IMR-90 (cell line): ENCODE measurements at regions of chr17 and their contacts with region 1.

Region 1: GRCh38 chr17:47776330-47777197 is 43.5 kb downstream of the TBX21 start:
- DNase-seq: peak; percentile 42
- ATAC-seq: peak; percentile 94
- H3K4me3 ChIP-seq: no peak overlapping the region
- H3K27ac ChIP-seq: no peak overlapping the region
- H3K4me1 ChIP-seq: no peaks in the 10 kb centered on the region
- H3K27me3 ChIP-seq: peaks cover 60% of the 10 kb centered on the region
- CTCF ChIP-seq: peak; percentile 66
- POLR2A ChIP-seq: no peak
- RAD21 ChIP-seq: peak; percentile 67

Region 2: GRCh38 chr17:47253541-47254402 is 522.8 kb before region 1 on chr17 and contains the start of gene ITGB3:
- CTCF ChIA-PET with region 1: no interaction called
- POLR2A ChIA-PET with region 1: no interaction called
- dilution Hi-C with region 1: no loop called
- in situ Hi-C with region 1: no loop called
- intact Hi-C with region 1: no loop called
- DNase-seq: peak; percentile 67
- ATAC-seq: peak; percentile 91
- H3K4me3 ChIP-seq: peak within 1 kb of the TSS; percentile 99
- H3K27ac ChIP-seq: peak within 1 kb of the TSS; percentile 89
- H3K4me1 ChIP-seq: peaks cover 15% of the 10 kb centered on the region
- H3K27me3 ChIP-seq: no peaks in the 10 kb centered on the region; the same call in 1 of the 2 replicates
- CTCF ChIP-seq: peak; percentile 46
- POLR2A ChIP-seq: peak; percentile 57; the same call in 1 of the 2 replicates
- RAD21 ChIP-seq: peak; percentile 36
- total RNA-seq, gene ITGB3: 14.4 and 17.6 TPM in 2 replicates

Region 3: DNA sequence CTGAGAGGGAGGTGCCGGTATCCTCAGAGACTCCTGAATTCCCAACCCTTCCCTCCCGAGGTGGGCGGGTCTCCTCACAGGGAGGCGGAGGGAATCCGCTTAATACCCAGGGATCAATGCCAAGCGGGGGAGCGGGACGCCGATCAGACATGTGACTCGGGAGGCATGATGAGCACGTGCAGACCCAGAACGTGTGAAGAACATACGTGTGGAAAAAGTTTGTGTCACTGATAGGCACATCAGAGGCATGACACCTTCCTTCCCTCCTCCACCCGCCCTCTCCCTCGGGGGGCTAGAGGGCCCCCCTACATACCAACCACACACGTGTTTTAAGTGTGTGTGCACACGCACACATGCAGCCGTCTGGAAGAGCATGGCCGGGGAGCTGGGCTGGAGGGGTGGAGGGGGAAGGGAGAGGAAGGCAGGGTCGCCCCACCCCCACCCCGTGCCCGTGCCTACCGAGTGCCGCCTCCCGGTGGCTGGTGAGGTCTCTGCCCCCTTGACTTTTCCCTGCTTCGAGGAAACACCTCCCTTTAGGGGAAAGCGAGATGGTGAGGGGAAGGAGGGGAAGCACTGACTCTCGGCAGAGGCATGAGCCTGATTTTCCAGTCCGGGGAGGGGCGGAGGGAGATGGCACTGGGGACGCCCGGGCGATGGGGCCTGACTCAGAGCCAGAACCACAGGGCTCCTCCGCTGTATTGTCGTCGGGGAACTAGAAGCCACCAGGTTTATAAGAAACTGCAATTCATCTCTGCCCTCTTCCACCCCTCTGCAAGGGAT is 55.6 kb before region 1 on chr17:
- CTCF ChIA-PET with region 1: no interaction called
- POLR2A ChIA-PET with region 1: no interaction called
- dilution Hi-C with region 1: no loop called
- in situ Hi-C with region 1: no loop called
- intact Hi-C with region 1: loop called (anchors 10 kb)
- DNase-seq: no peak
- ATAC-seq: peak; percentile 7; the same call in 1 of the 2 replicates
- H3K4me3 ChIP-seq: no peak overlapping the region
- H3K27ac ChIP-seq: no peak overlapping the region
- H3K4me1 ChIP-seq: peaks cover 27% of the 10 kb centered on the region
- H3K27me3 ChIP-seq: peaks cover 87% of the 10 kb centered on the region
- CTCF ChIP-seq: no peak
- POLR2A ChIP-seq: no peak
- RAD21 ChIP-seq: no peak

Region 4: DNA sequence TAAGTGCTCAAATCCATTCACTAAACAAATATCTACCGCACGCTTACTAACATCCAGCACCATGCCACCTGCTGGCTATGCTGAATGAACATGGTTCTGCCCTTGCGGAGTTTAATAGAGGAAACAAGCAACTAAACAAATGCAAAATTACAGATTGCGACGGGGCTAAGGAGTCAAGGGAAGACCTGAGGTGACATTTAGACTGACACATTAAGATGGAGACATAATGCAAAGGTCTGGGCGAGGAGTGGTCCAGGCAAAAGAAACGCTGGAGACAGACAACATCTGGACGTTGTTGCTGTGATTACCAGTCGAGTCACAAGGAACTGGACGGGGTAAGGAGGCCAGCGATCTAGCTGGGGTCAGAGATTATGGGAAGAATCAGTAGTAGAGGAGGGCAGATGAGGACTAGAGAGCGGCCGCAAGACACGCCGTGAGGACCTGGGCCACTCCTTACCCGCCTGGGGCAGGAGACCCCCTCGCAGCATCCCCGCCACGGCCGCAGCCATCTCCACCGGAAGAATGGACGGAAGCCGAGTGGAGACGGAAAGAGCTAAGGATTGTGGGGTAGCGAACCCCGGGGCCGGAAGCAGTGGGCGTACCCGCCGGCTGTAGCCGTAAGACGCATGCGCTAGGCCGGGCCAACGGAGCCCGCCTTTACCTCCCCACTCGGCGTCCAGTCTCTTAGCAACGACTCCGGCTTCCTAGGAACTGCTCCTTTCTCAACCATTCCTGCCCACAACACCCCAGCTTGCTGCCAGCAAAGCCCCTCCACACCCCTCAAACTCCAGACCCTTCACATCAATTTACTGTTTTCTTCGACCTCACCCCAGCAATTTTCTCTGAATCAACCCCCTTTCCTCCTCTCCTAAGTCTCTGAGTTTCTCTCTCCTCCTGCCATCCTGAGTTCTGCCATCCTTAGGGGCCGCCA is 54.7 kb after region 1 on chr17 and contains the starts of genes LRRC46 and MRPL10:
- CTCF ChIA-PET with region 1: no interaction called
- POLR2A ChIA-PET with region 1: no interaction called
- dilution Hi-C with region 1: no loop called
- in situ Hi-C with region 1: no loop called
- intact Hi-C with region 1: no loop called
- DNase-seq: peak; percentile 90
- ATAC-seq: peak; percentile 95
- H3K4me3 ChIP-seq: peak within 1 kb of the TSS; percentile 84
- H3K27ac ChIP-seq: peak within 1 kb of the TSS; percentile 80
- H3K4me1 ChIP-seq: peaks cover 6% of the 10 kb centered on the region
- H3K27me3 ChIP-seq: no peaks in the 10 kb centered on the region
- CTCF ChIP-seq: peak; percentile 45
- POLR2A ChIP-seq: peak; percentile 93
- RAD21 ChIP-seq: 0 out of 2 replicates have a peak, but pooled peaks have one; percentile 8
- total RNA-seq, gene LRRC46: not detected in 2 replicates
- total RNA-seq, gene MRPL10: 28.1 and 32.3 TPM in 2 replicates

Region 5: GRCh38 chr17:47889734-47890529 is 113.4 kb after region 1 on chr17:
- CTCF ChIA-PET with region 1: no interaction called
- POLR2A ChIA-PET with region 1: no interaction called
- dilution Hi-C with region 1: no loop called
- in situ Hi-C with region 1: no loop called
- intact Hi-C with region 1: loop called (anchors 5 kb)
- DNase-seq: peak; percentile 77
- ATAC-seq: peak; percentile 99
- H3K4me3 ChIP-seq: no peak overlapping the region
- H3K27ac ChIP-seq: no peak overlapping the region
- H3K4me1 ChIP-seq: no peaks in the 10 kb centered on the region
- H3K27me3 ChIP-seq: peaks cover under 1% of the 10 kb centered on the region; the same call in 1 of the 2 replicates
- CTCF ChIP-seq: peak; percentile 96
- POLR2A ChIP-seq: peak; percentile 54
- RAD21 ChIP-seq: peak; percentile 99